CD8-positive, alpha-beta T cell (primary cell): ENCODE measurements at regions of chr7 and their contacts with region 1.

Region 1: GRCh38 chr7:134701272-134701671 is 54.6 kb downstream of the BPGM start:
- DNase-seq: peak in 7 of 9 experiments; percentile 4 to 67 (median 38)
- ATAC-seq: peak; percentile 62
- H3K4me3 ChIP-seq: no peak overlapping the region
- H3K4me3 Mint-ChIP-seq: no peak overlapping the region
- H3K27ac ChIP-seq: no peak overlapping the region
- H3K27ac Mint-ChIP-seq: no peak overlapping the region
- H3K4me1 ChIP-seq: no peaks in the 10 kb centered on the region
- H3K4me1 Mint-ChIP-seq: no peaks in the 10 kb centered on the region
- H3K27me3 ChIP-seq: no peaks in the 10 kb centered on the region
- H3K27me3 Mint-ChIP-seq: no peaks in the 10 kb centered on the region
- CTCF ChIP-seq: peak; percentile 32

Region 2: DNA sequence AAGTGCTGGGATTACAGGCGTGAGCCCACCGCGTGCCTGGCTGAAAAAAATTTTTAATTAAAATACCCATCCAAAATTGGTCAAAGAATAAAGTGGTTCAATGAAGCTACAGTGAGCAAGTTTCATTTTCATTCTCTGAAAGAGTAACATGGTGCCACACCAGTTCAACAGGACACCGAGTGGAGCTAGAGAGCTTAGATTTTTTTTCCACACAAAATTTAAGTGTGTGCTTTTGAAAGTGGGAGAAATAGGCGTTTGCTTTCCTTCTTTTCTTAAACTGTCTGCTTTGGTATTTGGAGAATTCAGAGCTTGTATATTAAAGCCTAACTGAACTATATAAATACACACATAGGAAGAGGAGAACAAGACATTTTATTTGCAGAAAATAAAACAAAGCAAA is 11.3 kb before region 1 on chr7:
- CTCF ChIA-PET with region 1: interaction called, 12 read pairs
- POLR2A ChIA-PET with region 1: interaction called, 3 read pairs
- intact Hi-C with region 1: no loop called
- DNase-seq: no peak
- ATAC-seq: no peak
- H3K4me3 ChIP-seq: no peak overlapping the region
- H3K4me3 Mint-ChIP-seq: no peak overlapping the region
- H3K27ac ChIP-seq: no peak overlapping the region
- H3K27ac Mint-ChIP-seq: no peak overlapping the region
- H3K4me1 ChIP-seq: peaks cover 4% of the 10 kb centered on the region
- H3K4me1 Mint-ChIP-seq: peaks cover 9% of the 10 kb centered on the region
- H3K27me3 ChIP-seq: no peaks in the 10 kb centered on the region
- H3K27me3 Mint-ChIP-seq: peaks cover 13% of the 10 kb centered on the region
- CTCF ChIP-seq: no peak